CD4-positive, alpha-beta memory T cell (primary cell): ENCODE measurements at regions of chr18 and their contacts with region 1.

Region 1: DNA sequence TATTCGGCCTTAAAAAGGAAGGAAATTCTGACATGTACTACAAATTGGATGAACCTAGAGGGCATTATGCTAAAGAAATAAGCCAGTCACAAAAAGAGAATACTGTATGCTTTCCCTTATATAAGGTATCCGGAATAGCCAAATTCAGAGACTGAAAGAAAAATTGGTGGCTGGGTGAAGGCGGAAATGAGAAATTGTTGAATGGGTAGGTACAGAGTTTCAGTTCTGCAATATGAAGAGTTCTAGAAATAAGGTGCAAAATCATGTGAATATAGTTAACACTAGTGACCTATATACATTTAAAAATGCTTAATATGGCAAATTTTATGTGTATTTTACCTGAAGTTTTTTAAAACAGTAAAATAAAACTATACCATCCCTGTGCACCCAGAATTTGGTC is 43.1 kb downstream of the RMP24 start:
- DNase-seq: no peak
- H3K4me3 ChIP-seq: no peak overlapping the region
- H3K4me3 Mint-ChIP-seq: no peak overlapping the region
- H3K27ac ChIP-seq: no peak overlapping the region
- H3K27ac Mint-ChIP-seq: no peak overlapping the region
- H3K4me1 ChIP-seq: no peaks in the 10 kb centered on the region
- H3K4me1 Mint-ChIP-seq: peaks cover 0 to 7% (median 3%) of the 10 kb centered on the region in 4 donors
- H3K27me3 ChIP-seq: no peaks in the 10 kb centered on the region
- H3K27me3 Mint-ChIP-seq: no peaks in the 10 kb centered on the region

Region 2: GRCh38 chr18:35713545-35713944 is 302.1 kb before region 1 on chr18:
- CTCF ChIA-PET with region 1: no interaction called
- POLR2A ChIA-PET with region 1: no interaction called
- intact Hi-C with region 1: no loop called
- DNase-seq: no peak
- H3K4me3 ChIP-seq: no peak overlapping the region
- H3K4me3 Mint-ChIP-seq: no peak overlapping the region
- H3K27ac ChIP-seq: no peak overlapping the region
- H3K27ac Mint-ChIP-seq: no peak overlapping the region
- H3K4me1 ChIP-seq: no peaks in the 10 kb centered on the region
- H3K4me1 Mint-ChIP-seq: no peaks in the 10 kb centered on the region
- H3K27me3 ChIP-seq: no peaks in the 10 kb centered on the region
- H3K27me3 Mint-ChIP-seq: peaks cover 0 to 1% of the 10 kb centered on the region in 2 donors

Region 3: GRCh38 chr18:35949903-35950627 is 65.6 kb before region 1 on chr18:
- CTCF ChIA-PET with region 1: no interaction called
- POLR2A ChIA-PET with region 1: no interaction called
- intact Hi-C with region 1: no loop called
- DNase-seq: peak; percentile 53 to 63 (median 60)
- H3K4me3 ChIP-seq: peak overlapping the region; percentile 3 to 36
- H3K4me3 Mint-ChIP-seq: peak overlapping the region; percentile 83 to 91 (median 88)
- H3K27ac ChIP-seq: no peak overlapping the region
- H3K27ac Mint-ChIP-seq: peak overlapping the region in 1 of 7 donors; percentile 72
- H3K4me1 ChIP-seq: peaks cover 7% of the 10 kb centered on the region
- H3K4me1 Mint-ChIP-seq: peaks cover 0 to 4% (median 3%) of the 10 kb centered on the region in 4 donors
- H3K27me3 ChIP-seq: no peaks in the 10 kb centered on the region
- H3K27me3 Mint-ChIP-seq: peaks cover 8 to 16% of the 10 kb centered on the region in 2 donors

Region 4: GRCh38 chr18:35993013-35993412 is 22.6 kb before region 1 on chr18:
- CTCF ChIA-PET with region 1: interaction called, 10 read pairs
- POLR2A ChIA-PET with region 1: no interaction called
- intact Hi-C with region 1: no loop called
- DNase-seq: no peak
- H3K4me3 ChIP-seq: no peak overlapping the region
- H3K4me3 Mint-ChIP-seq: no peak overlapping the region
- H3K27ac ChIP-seq: no peak overlapping the region
- H3K27ac Mint-ChIP-seq: no peak overlapping the region
- H3K4me1 ChIP-seq: no peaks in the 10 kb centered on the region
- H3K4me1 Mint-ChIP-seq: no peaks in the 10 kb centered on the region
- H3K27me3 ChIP-seq: no peaks in the 10 kb centered on the region
- H3K27me3 Mint-ChIP-seq: no peaks in the 10 kb centered on the region

Region 5: DNA sequence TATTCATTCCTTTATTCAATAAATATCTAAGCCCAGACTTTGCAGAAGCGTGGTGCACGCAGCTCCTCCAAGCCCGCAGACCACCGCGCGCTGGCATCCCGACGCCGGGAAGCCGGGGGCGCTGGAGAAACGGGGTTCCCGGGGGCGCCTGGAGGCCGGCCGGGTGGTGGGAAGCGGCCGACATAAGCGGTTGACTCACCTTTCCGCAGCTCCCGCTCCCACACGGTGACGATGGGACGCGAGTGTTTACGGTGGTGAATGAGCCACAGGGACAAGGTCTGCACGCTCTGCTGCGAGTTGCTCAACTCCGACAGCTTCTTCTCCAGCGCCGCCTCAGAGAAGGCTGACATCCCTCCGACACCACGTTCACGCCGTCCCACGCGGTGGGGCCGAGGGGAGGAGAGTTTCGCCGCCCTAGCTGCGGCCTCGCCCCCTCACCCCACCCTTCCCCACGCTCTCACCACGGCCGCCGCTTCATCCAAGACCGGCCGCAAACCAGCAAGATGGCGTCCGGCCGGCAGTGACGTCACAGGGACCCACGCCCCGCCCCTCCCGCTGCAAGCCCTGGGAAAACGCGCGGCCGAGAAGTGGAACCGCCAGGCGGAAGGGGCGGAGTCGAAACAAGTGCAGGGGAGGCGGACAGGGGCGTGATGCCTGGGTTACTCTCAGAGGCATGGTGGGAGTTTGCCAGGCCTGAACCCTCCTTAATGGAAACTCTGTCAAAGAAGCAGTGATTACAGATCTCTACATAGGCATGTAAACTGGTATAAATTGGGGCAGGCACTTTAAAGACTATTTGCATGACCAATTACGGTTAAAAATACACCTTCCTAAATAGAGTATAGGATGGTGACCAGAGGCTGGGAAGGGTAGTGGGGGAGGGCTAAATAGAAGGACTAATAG is 51.7 kb after region 1 on chr18 and contains the start of gene RPRD1A:
- CTCF ChIA-PET with region 1: interaction called, 16 read pairs
- POLR2A ChIA-PET with region 1: no interaction called
- intact Hi-C with region 1: loop called (anchors 5 kb)
- DNase-seq: peak; percentile 94 to 97 (median 94)
- H3K4me3 ChIP-seq: peak within 1 kb of the TSS; percentile 81 to 87
- H3K4me3 Mint-ChIP-seq: peak within 1 kb of the TSS; percentile 92 to 98 (median 95)
- H3K27ac ChIP-seq: peak within 1 kb of the TSS; percentile 74
- H3K27ac Mint-ChIP-seq: peak within 1 kb of the TSS; percentile 89 to 98 (median 96)
- H3K4me1 ChIP-seq: peaks cover 32% of the 10 kb centered on the region
- H3K4me1 Mint-ChIP-seq: peaks cover 31 to 48% (median 40%) of the 10 kb centered on the region in 4 donors
- H3K27me3 ChIP-seq: no peaks in the 10 kb centered on the region
- H3K27me3 Mint-ChIP-seq: peaks cover 0 to 1% of the 10 kb centered on the region in 2 donors
- total RNA-seq, gene RPRD1A: 40.1 to 42.3 TPM

Region 6: GRCh38 chr18:36129300-36130038 is 113.8 kb after region 1 on chr18 and contains the starts of genes ELP2 and SLC39A6:
- CTCF ChIA-PET with region 1: interaction called, 6 read pairs
- POLR2A ChIA-PET with region 1: interaction called, 3 read pairs
- intact Hi-C with region 1: loop called (anchors 1 kb)
- DNase-seq: peak; percentile 95
- H3K4me3 ChIP-seq: peak within 1 kb of the TSS; percentile 85 to 90
- H3K4me3 Mint-ChIP-seq: peak within 1 kb of the TSS; percentile 92 to 98 (median 98)
- H3K27ac ChIP-seq: peak within 1 kb of the TSS; percentile 100
- H3K27ac Mint-ChIP-seq: peak within 1 kb of the TSS; percentile 97 to 99 (median 98)
- H3K4me1 ChIP-seq: peaks cover 43% of the 10 kb centered on the region
- H3K4me1 Mint-ChIP-seq: peaks cover 39 to 80% (median 60%) of the 10 kb centered on the region in 4 donors
- H3K27me3 ChIP-seq: no peaks in the 10 kb centered on the region
- H3K27me3 Mint-ChIP-seq: no peaks in the 10 kb centered on the region
- total RNA-seq, gene ELP2: 139 to 143 TPM
- total RNA-seq, gene SLC39A6: 18.9 to 19.7 TPM

Region 7: GRCh38 chr18:36572135-36572856 is 556.7 kb after region 1 on chr18:
- CTCF ChIA-PET with region 1: interaction called, 4 read pairs
- POLR2A ChIA-PET with region 1: no interaction called
- intact Hi-C with region 1: loop called (anchors 5 kb)
- DNase-seq: no peak
- H3K4me3 ChIP-seq: no peak overlapping the region
- H3K4me3 Mint-ChIP-seq: no peak overlapping the region
- H3K27ac ChIP-seq: no peak overlapping the region
- H3K27ac Mint-ChIP-seq: peak overlapping the region in 2 of 7 donors; percentile 37 to 72
- H3K4me1 ChIP-seq: no peaks in the 10 kb centered on the region
- H3K4me1 Mint-ChIP-seq: peaks cover 0 to 2% (median 0%) of the 10 kb centered on the region in 4 donors
- H3K27me3 ChIP-seq: no peaks in the 10 kb centered on the region
- H3K27me3 Mint-ChIP-seq: no peaks in the 10 kb centered on the region